B cell (primary cell): ENCODE measurements at regions of chr2 and their contacts with region 1.

Region 1: GRCh38 chr2:186503848-186504606 is 18.0 kb downstream of the ZC3H15 start:
- DNase-seq: peak; percentile 40
- ATAC-seq: no peak
- H3K4me3 ChIP-seq: no peak overlapping the region
- H3K4me3 Mint-ChIP-seq: no peak overlapping the region
- H3K27ac ChIP-seq: no peak overlapping the region
- H3K27ac Mint-ChIP-seq: no peak overlapping the region
- H3K4me1 ChIP-seq: no peaks in the 10 kb centered on the region
- H3K4me1 Mint-ChIP-seq: peaks cover 5% of the 10 kb centered on the region
- H3K27me3 ChIP-seq: no peaks in the 10 kb centered on the region
- H3K27me3 Mint-ChIP-seq: no peaks in the 10 kb centered on the region
- CTCF ChIP-seq: peak; percentile 81

Region 2: GRCh38 chr2:186379052-186379451 is 125.0 kb before region 1 on chr2:
- CTCF ChIA-PET with region 1: no interaction called
- POLR2A ChIA-PET with region 1: no interaction called
- intact Hi-C with region 1: no loop called
- DNase-seq: no peak
- ATAC-seq: no peak
- H3K4me3 ChIP-seq: no peak overlapping the region
- H3K4me3 Mint-ChIP-seq: no peak overlapping the region
- H3K27ac ChIP-seq: no peak overlapping the region
- H3K27ac Mint-ChIP-seq: no peak overlapping the region
- H3K4me1 ChIP-seq: no peaks in the 10 kb centered on the region
- H3K4me1 Mint-ChIP-seq: peaks cover 1% of the 10 kb centered on the region
- H3K27me3 ChIP-seq: no peaks in the 10 kb centered on the region
- H3K27me3 Mint-ChIP-seq: no peaks in the 10 kb centered on the region
- CTCF ChIP-seq: no peak

Region 3: DNA sequence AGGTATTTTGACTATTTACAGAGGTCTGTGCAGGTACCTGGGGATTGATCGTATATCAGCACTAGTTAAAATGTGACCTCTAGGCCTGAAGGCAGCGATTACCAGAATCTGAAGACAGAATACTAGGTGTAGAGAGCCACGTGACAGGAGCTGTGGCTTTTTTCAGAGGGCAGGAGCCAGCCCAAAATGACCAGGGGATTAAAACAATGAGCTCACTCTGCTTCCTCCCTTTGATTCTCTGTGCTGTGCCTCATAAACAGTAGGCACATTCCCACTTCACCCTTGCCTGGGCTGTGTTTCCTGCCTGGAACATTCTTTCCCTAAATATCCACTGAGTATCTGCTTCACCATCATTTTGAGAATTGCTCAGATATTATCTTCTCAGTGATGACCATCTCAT is 101.0 kb after region 1 on chr2:
- CTCF ChIA-PET with region 1: no interaction called
- POLR2A ChIA-PET with region 1: no interaction called
- intact Hi-C with region 1: no loop called
- DNase-seq: no peak
- ATAC-seq: no peak
- H3K4me3 ChIP-seq: no peak overlapping the region
- H3K4me3 Mint-ChIP-seq: no peak overlapping the region
- H3K27ac ChIP-seq: no peak overlapping the region
- H3K27ac Mint-ChIP-seq: no peak overlapping the region
- H3K4me1 ChIP-seq: no peaks in the 10 kb centered on the region
- H3K4me1 Mint-ChIP-seq: no peaks in the 10 kb centered on the region
- H3K27me3 ChIP-seq: no peaks in the 10 kb centered on the region
- H3K27me3 Mint-ChIP-seq: no peaks in the 10 kb centered on the region
- CTCF ChIP-seq: no peak

Region 4: GRCh38 chr2:186641807-186642321 is 137.8 kb after region 1 on chr2:
- CTCF ChIA-PET with region 1: interaction called, 71 read pairs
- POLR2A ChIA-PET with region 1: no interaction called
- intact Hi-C with region 1: loop called (anchors 1 kb)
- DNase-seq: peak; percentile 37
- ATAC-seq: no peak
- H3K4me3 ChIP-seq: no peak overlapping the region
- H3K4me3 Mint-ChIP-seq: no peak overlapping the region
- H3K27ac ChIP-seq: no peak overlapping the region
- H3K27ac Mint-ChIP-seq: no peak overlapping the region
- H3K4me1 ChIP-seq: no peaks in the 10 kb centered on the region
- H3K4me1 Mint-ChIP-seq: no peaks in the 10 kb centered on the region
- H3K27me3 ChIP-seq: no peaks in the 10 kb centered on the region
- H3K27me3 Mint-ChIP-seq: no peaks in the 10 kb centered on the region
- CTCF ChIP-seq: peak; percentile 53